Dorsolateral prefrontal cortex (tissue), 120 donors: ENCODE measurements at regions of chr6 and their contacts with region 1.

Region 1: DNA sequence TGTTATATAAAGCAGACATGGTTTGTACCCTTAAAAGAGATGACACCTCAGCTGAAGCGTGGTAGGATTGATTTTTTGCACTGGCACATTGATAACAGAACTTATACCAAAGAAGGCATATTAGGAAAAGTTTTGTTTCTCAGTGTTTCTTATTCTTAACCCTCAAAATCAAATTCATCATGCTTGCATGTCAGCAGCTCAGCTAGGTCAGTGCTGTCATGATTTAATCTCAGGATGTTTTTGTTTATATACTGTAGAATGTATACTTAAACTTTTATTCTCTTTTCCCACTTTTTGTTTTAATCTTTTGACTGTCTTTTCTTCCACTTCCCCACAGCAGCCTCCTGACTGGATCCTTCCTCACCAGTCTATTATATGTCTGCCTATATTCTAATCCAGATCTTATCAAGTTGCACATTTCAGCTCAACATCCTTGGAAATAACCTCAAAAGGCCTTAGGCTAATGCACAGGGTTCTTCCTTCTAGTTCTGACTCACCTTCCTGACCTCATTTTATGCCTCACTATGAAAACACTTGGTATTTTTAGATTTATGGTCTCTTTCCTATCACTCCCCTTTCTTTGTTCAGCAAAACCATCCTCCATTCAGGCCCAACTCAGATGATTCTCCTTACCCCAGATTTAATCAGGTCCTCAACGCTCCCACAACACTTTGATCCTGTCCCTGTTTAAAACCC is 7.1 kb downstream of the HEBP2 start:
- DNase-seq: no peak
- H3K4me3 ChIP-seq: no peak overlapping the region
- H3K27ac ChIP-seq: peak overlapping the region in 4 of 59 donors; percentile 11 to 32 (median 20)
- H3K27me3 ChIP-seq: no peaks in the 10 kb centered on the region
- CTCF ChIP-seq: no peak

Region 2: GRCh38 chr6:138773177-138774091 is 362.3 kb after region 1 on chr6 and contains the start of gene CCDC28A:
- intact Hi-C with region 1: loop called in 1 of 2 experiments (anchors 10 kb)
- DNase-seq: peak; percentile 85 to 97 (median 92)
- H3K4me3 ChIP-seq: peak within 1 kb of the TSS; percentile 66 to 99 (median 88)
- H3K27ac ChIP-seq: peak within 1 kb of the TSS; percentile 95 to 100 (median 99)
- H3K27me3 ChIP-seq: no peaks in the 10 kb centered on the region
- CTCF ChIP-seq: peak in 18 of 56 donors; percentile 7 to 51 (median 26)
- total RNA-seq, gene CCDC28A: 18.1 to 50.8 (median 35.7) TPM